Esophagus muscularis mucosa (tissue), 4 donors: ENCODE measurements at regions of chr15 and their contacts with region 1.

Region 1: DNA sequence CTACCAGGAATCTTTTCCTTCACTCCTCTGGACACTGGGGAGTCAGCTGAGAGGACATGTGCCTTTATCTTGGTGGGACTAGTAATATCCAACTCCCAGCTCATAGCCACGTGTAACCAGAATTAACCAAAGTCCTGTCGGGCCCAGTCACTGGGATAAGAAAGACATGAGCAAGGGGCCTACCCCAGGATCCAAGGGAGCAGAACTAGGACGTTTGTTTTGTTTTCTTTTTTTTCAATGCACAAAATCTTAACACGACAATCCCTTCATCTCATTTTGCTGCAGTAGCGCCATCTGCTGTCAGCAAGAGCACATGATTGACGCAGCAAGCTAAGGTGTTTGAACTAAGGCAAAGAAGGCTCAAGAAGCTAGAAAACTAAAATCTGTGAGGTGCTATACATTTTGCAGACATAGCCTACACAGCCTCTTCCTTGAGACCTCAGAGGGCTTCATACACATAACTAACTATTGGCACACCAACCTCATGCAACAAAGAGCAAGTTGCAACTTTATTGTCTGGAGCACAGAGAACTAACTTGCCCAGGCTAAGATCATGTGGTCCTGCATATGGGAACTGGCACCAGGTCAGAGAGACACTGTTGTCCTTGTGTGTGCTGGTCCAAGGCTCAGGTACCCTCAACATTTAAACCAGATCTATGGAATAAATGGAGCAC is 43.6 kb downstream of the RLBP1 start:
- DNase-seq: no peak
- H3K4me3 ChIP-seq: no peak overlapping the region
- H3K27ac ChIP-seq: peak overlapping the region in 2 of 4 donors; percentile 5 to 22
- H3K4me1 ChIP-seq: peaks cover 11 to 48% (median 27%) of the 10 kb centered on the region in 4 donors
- H3K27me3 ChIP-seq: no peaks in the 10 kb centered on the region
- CTCF ChIP-seq: peak; percentile 78 to 88 (median 79)
- EP300 ChIP-seq: no peak
- POLR2A ChIP-seq: no peak

Region 2: GRCh38 chr15:88904624-88905327 is 273.0 kb before region 1 on chr15:
- intact Hi-C with region 1: loop called (anchors 5 kb)
- DNase-seq: no peak
- H3K4me3 ChIP-seq: no peak overlapping the region
- H3K27ac ChIP-seq: peak overlapping the region in 3 of 4 donors; percentile 29 to 55 (median 36)
- H3K4me1 ChIP-seq: peaks cover 39 to 63% (median 55%) of the 10 kb centered on the region in 4 donors
- H3K27me3 ChIP-seq: no peaks in the 10 kb centered on the region
- CTCF ChIP-seq: peak in 2 of 3 experiments; percentile 98 to 99
- EP300 ChIP-seq: no peak
- POLR2A ChIP-seq: no peak

Region 3: DNA sequence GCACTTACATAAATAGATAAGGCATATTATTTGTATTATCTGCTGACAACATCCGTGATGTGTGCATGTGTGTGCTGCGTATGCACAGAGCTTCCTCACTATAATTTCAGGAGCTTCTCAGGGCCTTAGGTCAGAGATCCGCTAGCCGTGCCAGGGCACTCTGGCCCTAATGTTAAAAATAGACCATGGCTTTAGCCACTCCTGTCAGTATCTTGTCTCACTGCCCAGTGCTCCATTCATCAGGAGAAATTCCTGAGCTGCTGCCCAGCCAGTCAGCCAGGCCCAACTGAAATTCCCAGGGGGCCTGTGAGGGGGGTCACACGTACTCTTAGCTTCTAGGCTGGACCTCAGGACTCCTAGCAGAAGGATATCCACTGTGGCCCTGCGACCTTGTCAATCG is 159.6 kb before region 1 on chr15:
- intact Hi-C with region 1: no loop called
- DNase-seq: no peak
- H3K4me3 ChIP-seq: peak overlapping the region in 1 of 4 donors; percentile 43
- H3K27ac ChIP-seq: peak overlapping the region; percentile 82 to 92 (median 87)
- H3K4me1 ChIP-seq: peaks cover 42 to 68% (median 65%) of the 10 kb centered on the region in 4 donors
- H3K27me3 ChIP-seq: no peaks in the 10 kb centered on the region
- CTCF ChIP-seq: no peak
- EP300 ChIP-seq: no peak
- POLR2A ChIP-seq: no peak

Region 4: GRCh38 chr15:89057504-89058133 is 120.2 kb before region 1 on chr15:
- intact Hi-C with region 1: loop called (anchors 2 kb)
- DNase-seq: peak; percentile 97
- H3K4me3 ChIP-seq: no peak overlapping the region
- H3K27ac ChIP-seq: peak overlapping the region in 1 of 4 donors; percentile 10
- H3K4me1 ChIP-seq: peaks cover 5 to 14% (median 11%) of the 10 kb centered on the region in 4 donors
- H3K27me3 ChIP-seq: no peaks in the 10 kb centered on the region
- CTCF ChIP-seq: peak; percentile 98 to 99 (median 98)
- EP300 ChIP-seq: no peak
- POLR2A ChIP-seq: no peak

Region 5: DNA sequence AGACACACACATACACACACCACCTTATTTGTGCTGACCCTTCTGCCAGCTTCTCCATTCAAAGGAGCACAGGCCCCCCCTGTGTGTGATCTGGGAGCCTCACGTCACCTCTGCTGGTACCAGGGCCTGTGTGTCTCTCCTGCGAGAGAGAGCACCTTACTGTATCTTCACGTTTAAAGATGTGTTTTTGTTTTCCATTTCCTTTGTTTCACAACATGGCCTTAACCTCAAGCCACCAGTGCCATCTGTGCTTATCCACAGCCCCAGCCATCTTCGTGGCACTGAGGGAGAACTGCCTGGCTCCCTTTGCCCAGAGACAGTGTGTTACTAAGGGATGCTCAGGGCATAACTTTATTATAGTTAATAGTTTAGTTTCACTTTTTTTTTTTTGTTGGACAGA is 37.2 kb before region 1 on chr15:
- intact Hi-C with region 1: no loop called
- DNase-seq: no peak
- H3K4me3 ChIP-seq: no peak overlapping the region
- H3K27ac ChIP-seq: peak overlapping the region in 1 of 4 donors; percentile 5
- H3K4me1 ChIP-seq: peaks cover 78 to 95% (median 88%) of the 10 kb centered on the region in 4 donors
- H3K27me3 ChIP-seq: no peaks in the 10 kb centered on the region
- CTCF ChIP-seq: no peak
- EP300 ChIP-seq: no peak
- POLR2A ChIP-seq: no peak